B cell (primary cell): ENCODE measurements at regions of chr18 and their contacts with region 1.

Region 1: DNA sequence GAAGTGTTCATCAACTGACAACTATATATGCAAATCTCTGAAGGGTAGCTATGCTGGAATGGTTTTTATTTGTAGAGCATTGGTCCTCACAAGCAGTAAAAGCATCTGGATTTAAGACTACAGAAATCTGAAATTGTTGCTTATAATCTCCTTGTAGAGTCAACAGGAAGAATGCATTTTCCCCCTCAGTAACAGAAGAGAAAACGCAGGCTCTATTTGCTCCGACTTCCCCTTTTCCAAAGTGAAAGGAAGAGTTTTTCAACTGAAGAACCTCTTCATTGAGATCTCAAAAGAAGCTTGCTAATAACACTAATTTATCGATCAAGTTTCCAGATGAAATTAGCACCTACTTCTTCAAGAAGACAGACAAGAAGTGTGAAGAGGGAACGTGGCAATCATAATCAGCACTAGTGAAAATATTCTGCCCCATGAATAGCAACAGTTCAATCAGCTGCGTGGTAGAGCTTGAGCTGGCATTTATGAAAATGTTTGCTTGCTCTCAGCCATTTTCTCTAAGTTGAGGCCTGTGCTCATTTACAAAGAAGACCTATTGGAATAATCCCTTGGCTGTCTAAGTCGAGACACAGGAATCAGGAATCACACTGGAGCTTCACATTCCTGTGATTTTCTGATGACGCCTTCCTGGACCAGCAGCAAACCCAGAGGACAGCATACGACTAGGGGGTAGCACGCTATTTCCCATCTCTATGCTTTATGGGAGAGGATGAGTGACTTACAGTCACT is 43.7 kb downstream of the TGIF1 start:
- DNase-seq: peak; percentile 64
- ATAC-seq: peak; percentile 50
- H3K4me3 ChIP-seq: peak overlapping the region; percentile 26 to 52 (median 44)
- H3K4me3 Mint-ChIP-seq: peak overlapping the region; percentile 87
- H3K27ac ChIP-seq: peak overlapping the region; percentile 25 to 70
- H3K27ac Mint-ChIP-seq: peak overlapping the region; percentile 88
- H3K4me1 ChIP-seq: peaks cover 13 to 25% of the 10 kb centered on the region in 2 donors
- H3K4me1 Mint-ChIP-seq: peaks cover 37% of the 10 kb centered on the region
- H3K27me3 ChIP-seq: peaks cover 0 to 4% (median 0%) of the 10 kb centered on the region in 4 experiments
- H3K27me3 Mint-ChIP-seq: peaks cover 8% of the 10 kb centered on the region
- CTCF ChIP-seq: no peak

Region 2: GRCh38 chr18:3481696-3482210 is 11.9 kb before region 1 on chr18:
- CTCF ChIA-PET with region 1: interaction called, 16 read pairs
- POLR2A ChIA-PET with region 1: no interaction called
- intact Hi-C with region 1: no loop called
- DNase-seq: peak; percentile 36
- ATAC-seq: peak; percentile 62
- H3K4me3 ChIP-seq: no peak overlapping the region
- H3K4me3 Mint-ChIP-seq: no peak overlapping the region
- H3K27ac ChIP-seq: no peak overlapping the region
- H3K27ac Mint-ChIP-seq: peak overlapping the region; percentile 17
- H3K4me1 ChIP-seq: no peaks in the 10 kb centered on the region
- H3K4me1 Mint-ChIP-seq: no peaks in the 10 kb centered on the region
- H3K27me3 ChIP-seq: no peaks in the 10 kb centered on the region
- H3K27me3 Mint-ChIP-seq: no peaks in the 10 kb centered on the region
- CTCF ChIP-seq: peak; percentile 44

Region 3: GRCh38 chr18:3585656-3586509 is 92.2 kb after region 1 on chr18:
- CTCF ChIA-PET with region 1: interaction called, 9 read pairs
- POLR2A ChIA-PET with region 1: no interaction called
- intact Hi-C with region 1: loop called (anchors 2 kb)
- DNase-seq: peak; percentile 80
- ATAC-seq: peak; percentile 49
- H3K4me3 ChIP-seq: peak overlapping the region in 4 of 5 experiments; percentile 9 to 22 (median 18)
- H3K4me3 Mint-ChIP-seq: peak overlapping the region; percentile 69
- H3K27ac ChIP-seq: peak overlapping the region; percentile 81 to 87
- H3K27ac Mint-ChIP-seq: peak overlapping the region; percentile 83
- H3K4me1 ChIP-seq: peaks cover 42 to 43% of the 10 kb centered on the region in 2 donors
- H3K4me1 Mint-ChIP-seq: peaks cover 47% of the 10 kb centered on the region
- H3K27me3 ChIP-seq: no peaks in the 10 kb centered on the region
- H3K27me3 Mint-ChIP-seq: no peaks in the 10 kb centered on the region
- CTCF ChIP-seq: peak; percentile 57

Region 4: DNA sequence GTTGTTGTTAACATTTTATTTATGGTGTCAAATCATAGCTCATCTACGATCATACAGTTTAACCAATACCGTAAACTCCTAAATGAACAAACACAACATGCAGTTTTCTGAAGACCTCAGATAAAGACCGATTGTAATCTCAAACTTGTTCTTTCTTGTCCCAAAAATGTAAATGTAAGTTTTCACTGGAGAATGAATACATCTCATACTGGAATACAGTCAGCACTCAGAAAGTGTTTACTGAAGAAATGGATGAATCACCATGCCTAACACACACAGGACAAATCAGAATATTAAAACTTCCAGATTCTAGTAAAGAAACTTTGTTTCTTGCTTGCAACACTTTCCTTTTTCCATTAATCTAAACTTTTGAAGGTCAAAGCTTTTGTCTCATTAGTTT is 581.0 kb after region 1 on chr18:
- CTCF ChIA-PET with region 1: no interaction called
- POLR2A ChIA-PET with region 1: no interaction called
- intact Hi-C with region 1: no loop called
- DNase-seq: no peak
- ATAC-seq: no peak
- H3K4me3 ChIP-seq: no peak overlapping the region
- H3K4me3 Mint-ChIP-seq: no peak overlapping the region
- H3K27ac ChIP-seq: no peak overlapping the region
- H3K27ac Mint-ChIP-seq: no peak overlapping the region
- H3K4me1 ChIP-seq: no peaks in the 10 kb centered on the region
- H3K4me1 Mint-ChIP-seq: no peaks in the 10 kb centered on the region
- H3K27me3 ChIP-seq: no peaks in the 10 kb centered on the region
- H3K27me3 Mint-ChIP-seq: no peaks in the 10 kb centered on the region
- CTCF ChIP-seq: no peak